Mammary epithelial cell (primary cell): ENCODE measurements at regions of chr3 and their contacts with region 1.

Region 1: GRCh38 chr3:141452036-141452435 is 34.8 kb upstream of the RASA2 start:
- DNase-seq: peak; percentile 31
- H3K4me3 ChIP-seq: no peak overlapping the region
- H3K27ac ChIP-seq: no peak overlapping the region
- H3K4me1 ChIP-seq: no peaks in the 10 kb centered on the region
- H3K27me3 ChIP-seq: no peaks in the 10 kb centered on the region
- CTCF ChIP-seq: peak; percentile 65 to 78

Region 2: DNA sequence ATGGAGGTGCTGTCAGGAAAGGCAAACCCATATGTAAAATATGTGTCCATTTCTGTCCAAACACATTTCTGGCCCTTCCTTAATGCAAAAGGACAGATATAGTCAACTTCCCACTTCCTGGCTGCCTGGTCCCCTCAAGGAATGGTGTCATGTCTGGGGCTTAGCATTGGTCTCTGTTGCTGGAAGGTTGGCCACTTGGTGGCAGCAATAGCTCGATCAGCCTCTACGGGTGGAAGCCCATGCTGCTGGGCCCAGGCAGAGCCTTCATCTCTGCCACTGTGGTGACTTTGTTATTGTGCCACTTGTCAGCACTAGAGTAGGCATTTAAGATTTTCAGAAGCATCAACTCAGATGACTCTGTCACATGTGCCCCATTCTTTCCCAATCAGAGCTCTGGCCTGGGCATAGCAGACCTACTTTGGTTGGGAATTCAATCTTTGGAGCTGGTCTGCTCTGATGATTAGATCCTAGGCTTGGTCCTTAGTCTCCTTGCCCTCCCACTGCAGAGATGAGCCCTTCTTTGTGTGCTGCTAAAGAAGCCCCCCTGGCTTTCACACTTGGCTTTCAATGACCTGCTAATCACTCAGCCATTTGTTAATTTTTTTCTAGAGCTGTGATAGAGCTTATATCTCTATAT is 451.9 kb before region 1 on chr3:
- CTCF ChIA-PET with region 1: no interaction called
- dilution Hi-C with region 1: no loop called
- in situ Hi-C with region 1: no loop called
- intact Hi-C with region 1: loop called (anchors 10 kb)
- DNase-seq: peak; percentile 51
- H3K4me3 ChIP-seq: no peak overlapping the region
- H3K27ac ChIP-seq: no peak overlapping the region
- H3K4me1 ChIP-seq: no peaks in the 10 kb centered on the region
- H3K27me3 ChIP-seq: no peaks in the 10 kb centered on the region
- CTCF ChIP-seq: peak; percentile 66 to 88

Region 3: GRCh38 chr3:141231101-141231935 is 220.7 kb before region 1 on chr3 and contains the start of gene PXYLP1:
- CTCF ChIA-PET with region 1: interaction called, 9 read pairs
- dilution Hi-C with region 1: no loop called
- in situ Hi-C with region 1: no loop called
- intact Hi-C with region 1: loop called (anchors 1 kb)
- DNase-seq: peak; percentile 78
- H3K4me3 ChIP-seq: peak within 1 kb of the TSS; percentile 38 to 70 (median 61)
- H3K27ac ChIP-seq: no peak within 1 kb of the TSS
- H3K4me1 ChIP-seq: peaks cover 6% of the 10 kb centered on the region
- H3K27me3 ChIP-seq: no peaks in the 10 kb centered on the region
- CTCF ChIP-seq: peak; percentile 51 to 54
- total RNA-seq, gene PXYLP1: 2.5 to 6.3 TPM

Region 4: GRCh38 chr3:141303481-141304223 is 148.4 kb before region 1 on chr3:
- CTCF ChIA-PET with region 1: interaction called, 8 read pairs
- dilution Hi-C with region 1: loop called (anchors 5 kb)
- in situ Hi-C with region 1: loop called (anchors 5 to 10 kb)
- intact Hi-C with region 1: loop called (anchors 1 kb)
- DNase-seq: peak; percentile 72
- H3K4me3 ChIP-seq: no peak overlapping the region
- H3K27ac ChIP-seq: no peak overlapping the region
- H3K4me1 ChIP-seq: peaks cover 12% of the 10 kb centered on the region
- H3K27me3 ChIP-seq: no peaks in the 10 kb centered on the region
- CTCF ChIP-seq: peak; percentile 68 to 75

Region 5: GRCh38 chr3:141311496-141312353 is 140.3 kb before region 1 on chr3:
- CTCF ChIA-PET with region 1: interaction called, 5 read pairs
- dilution Hi-C with region 1: loop called (anchors 5 kb)
- in situ Hi-C with region 1: loop called in 1 of 2 experiments (anchors 10 kb)
- intact Hi-C with region 1: loop called (anchors 1 kb)
- DNase-seq: peak; percentile 94
- H3K4me3 ChIP-seq: peak overlapping the region; percentile 75 to 89 (median 78)
- H3K27ac ChIP-seq: peak overlapping the region; percentile 59
- H3K4me1 ChIP-seq: peaks cover 12% of the 10 kb centered on the region
- H3K27me3 ChIP-seq: no peaks in the 10 kb centered on the region
- CTCF ChIP-seq: peak; percentile 65 to 72

Region 6: DNA sequence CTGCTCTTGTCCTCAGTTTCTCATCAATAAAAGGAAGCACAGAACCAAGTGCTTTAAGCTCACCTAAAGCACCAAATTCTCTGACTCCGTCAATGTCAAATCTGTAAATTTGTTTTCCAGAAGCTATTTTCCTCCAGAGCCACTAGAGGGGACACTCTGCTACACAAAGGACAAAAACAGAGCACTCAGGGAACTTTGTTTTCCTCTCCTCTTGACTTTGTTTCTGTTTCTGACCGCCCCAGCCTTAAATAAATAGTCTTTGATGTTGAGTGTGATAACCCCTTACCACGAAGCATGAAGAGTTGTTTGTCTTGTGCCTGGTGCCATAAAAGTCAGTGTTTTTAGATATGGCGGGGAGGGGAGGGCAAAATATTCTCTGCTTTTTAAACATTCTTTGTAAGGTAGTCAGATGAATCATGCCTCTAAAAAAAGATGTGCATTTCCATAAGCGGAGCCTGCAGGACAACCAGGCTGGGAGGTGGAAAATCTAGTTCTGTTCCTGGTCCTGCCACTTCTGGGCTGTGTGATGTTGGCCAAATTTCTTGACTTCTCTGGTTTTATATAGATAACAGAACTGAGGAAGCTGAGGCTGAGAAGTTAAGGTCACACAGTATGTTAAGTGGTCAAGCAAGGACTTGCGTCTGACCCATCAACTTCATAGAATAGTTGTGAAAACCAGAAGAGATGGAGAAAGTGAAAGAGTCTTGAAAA is 91.0 kb before region 1 on chr3:
- CTCF ChIA-PET with region 1: interaction called, 3 read pairs
- dilution Hi-C with region 1: no loop called
- in situ Hi-C with region 1: no loop called
- intact Hi-C with region 1: loop called (anchors 1 kb)
- DNase-seq: peak; percentile 70
- H3K4me3 ChIP-seq: peak overlapping the region in 1 of 3 experiments; percentile 17
- H3K27ac ChIP-seq: no peak overlapping the region
- H3K4me1 ChIP-seq: peaks cover 25% of the 10 kb centered on the region
- H3K27me3 ChIP-seq: no peaks in the 10 kb centered on the region
- CTCF ChIP-seq: peak; percentile 70 to 85

Region 7: GRCh38 chr3:141412087-141412935 is 39.7 kb before region 1 on chr3:
- CTCF ChIA-PET with region 1: no interaction called
- dilution Hi-C with region 1: loop called (anchors 5 kb)
- in situ Hi-C with region 1: no loop called
- intact Hi-C with region 1: no loop called
- DNase-seq: peak; percentile 58
- H3K4me3 ChIP-seq: peak overlapping the region; percentile 17 to 37 (median 26)
- H3K27ac ChIP-seq: peak overlapping the region; percentile 85
- H3K4me1 ChIP-seq: peaks cover 41% of the 10 kb centered on the region
- H3K27me3 ChIP-seq: no peaks in the 10 kb centered on the region
- CTCF ChIP-seq: no peak

Region 8: GRCh38 chr3:141441381-141442364 is 10.4 kb before region 1 on chr3:
- CTCF ChIA-PET with region 1: no interaction called
- dilution Hi-C with region 1: no loop called
- in situ Hi-C with region 1: no loop called
- intact Hi-C with region 1: no loop called
- DNase-seq: peak; percentile 50
- H3K4me3 ChIP-seq: no peak overlapping the region
- H3K27ac ChIP-seq: no peak overlapping the region
- H3K4me1 ChIP-seq: peaks cover 10% of the 10 kb centered on the region
- H3K27me3 ChIP-seq: no peaks in the 10 kb centered on the region
- CTCF ChIP-seq: peak; percentile 74 to 92

Region 9: DNA sequence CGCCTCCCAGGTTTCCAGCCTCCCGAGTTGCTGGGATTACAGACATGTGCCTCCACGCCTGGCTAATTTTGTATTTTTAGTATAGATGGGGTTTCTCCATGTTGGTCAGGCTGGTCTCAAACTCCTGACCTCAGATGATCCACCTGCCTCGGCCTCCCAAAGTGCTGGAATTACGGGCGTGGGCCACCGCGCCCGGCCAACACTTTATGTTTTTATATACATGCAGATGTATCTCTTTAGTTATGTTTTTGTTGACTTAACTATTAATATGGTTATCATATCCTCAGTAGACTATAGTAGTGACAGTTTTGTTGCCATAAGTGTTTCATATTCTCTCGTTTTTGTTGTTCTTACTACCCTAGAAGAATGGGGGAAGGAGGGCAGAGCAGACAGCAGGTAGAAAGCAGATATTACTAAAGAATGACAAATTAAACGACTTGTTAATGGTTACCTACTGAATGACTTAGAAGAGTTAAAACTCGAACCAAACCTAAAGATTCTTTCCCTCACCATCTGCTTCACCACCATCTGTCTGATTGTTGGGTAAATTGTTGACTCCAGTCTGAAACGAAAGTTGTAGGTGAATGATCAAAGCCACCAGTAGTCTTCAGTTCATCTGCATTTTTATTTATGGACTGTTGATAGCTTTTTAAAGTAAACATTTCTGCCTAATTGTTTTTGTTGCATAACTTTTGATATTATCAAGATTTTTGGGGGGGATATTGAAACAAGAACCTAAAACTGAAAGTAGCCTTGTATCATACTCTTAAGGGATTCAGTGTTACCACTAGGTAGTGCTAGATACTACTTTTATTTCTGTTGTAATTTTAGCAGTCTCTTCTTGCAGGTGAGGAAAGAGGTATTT is 124.1 kb after region 1 on chr3:
- CTCF ChIA-PET with region 1: no interaction called
- dilution Hi-C with region 1: no loop called
- in situ Hi-C with region 1: no loop called
- intact Hi-C with region 1: no loop called
- DNase-seq: no peak
- H3K4me3 ChIP-seq: no peak overlapping the region
- H3K27ac ChIP-seq: no peak overlapping the region
- H3K4me1 ChIP-seq: no peaks in the 10 kb centered on the region
- H3K27me3 ChIP-seq: no peaks in the 10 kb centered on the region
- CTCF ChIP-seq: peak; percentile 41 to 47